ENCODE measurements at regions of chr21 and their contacts with region 1.

Region 1: GRCh38 chr21:26032263-26032662 is 138.3 kb downstream of the APP start:
- DNase-seq: no peak
- ATAC-seq: no peak
- H3K4me3 ChIP-seq: no peak overlapping the region
- H3K27ac ChIP-seq: no peak overlapping the region
- H3K4me1 ChIP-seq: no peaks in the 10 kb centered on the region
- H3K27me3 ChIP-seq: no peaks in the 10 kb centered on the region
- CTCF ChIP-seq: no peak
- POLR2A ChIP-seq: no peak
- RAD21 ChIP-seq: no peak

Region 2: DNA sequence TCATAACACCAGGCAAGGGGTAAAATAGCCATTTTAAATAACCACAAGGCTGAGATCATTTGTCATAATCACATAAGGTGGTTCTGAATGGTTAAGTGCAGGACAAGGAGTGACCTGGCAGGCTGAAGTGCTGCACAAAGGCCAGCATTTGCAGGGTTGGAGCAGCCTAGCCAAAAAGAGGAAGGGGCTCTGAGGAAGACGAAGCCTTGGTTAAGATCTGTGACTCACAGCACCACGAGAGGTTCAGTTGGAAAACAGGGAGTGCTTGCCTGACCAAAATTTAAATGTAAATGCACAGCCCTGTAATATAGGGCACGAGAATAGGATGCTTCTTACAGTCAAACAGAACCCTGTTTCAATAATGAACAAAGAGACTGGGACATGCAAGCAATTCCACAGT is 309.6 kb before region 1 on chr21:
- CTCF ChIA-PET with region 1: interaction called, 11 read pairs
- POLR2A ChIA-PET with region 1: no interaction called
- dilution Hi-C with region 1: no loop called
- in situ Hi-C with region 1: no loop called
- intact Hi-C with region 1: no loop called
- DNase-seq: no peak
- ATAC-seq: no peak
- H3K4me3 ChIP-seq: no peak overlapping the region
- H3K27ac ChIP-seq: no peak overlapping the region
- H3K4me1 ChIP-seq: no peaks in the 10 kb centered on the region
- H3K27me3 ChIP-seq: no peaks in the 10 kb centered on the region
- CTCF ChIP-seq: no peak
- POLR2A ChIP-seq: no peak
- RAD21 ChIP-seq: no peak

Region 3: DNA sequence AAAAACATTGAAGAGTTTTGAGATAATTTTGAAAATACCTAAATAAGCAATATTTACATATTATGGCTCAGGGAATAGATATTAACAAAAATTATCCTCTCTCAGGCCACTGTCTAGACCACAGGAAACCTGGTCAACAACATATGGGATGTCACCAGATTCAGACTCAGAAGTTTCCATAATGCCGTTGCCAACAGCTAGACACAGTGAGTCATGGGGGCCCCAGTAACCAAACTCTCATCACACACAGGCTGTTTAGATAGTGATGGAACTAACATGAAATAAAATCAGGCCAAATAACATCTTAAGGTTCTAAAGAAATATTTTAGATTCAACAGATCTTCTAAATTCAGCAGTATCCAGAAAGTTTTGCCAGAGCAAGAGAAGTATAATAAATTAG is 1616.3 kb after region 1 on chr21:
- CTCF ChIA-PET with region 1: no interaction called
- POLR2A ChIA-PET with region 1: no interaction called
- dilution Hi-C with region 1: no loop called
- in situ Hi-C with region 1: no loop called
- intact Hi-C with region 1: no loop called
- DNase-seq: peak; percentile 90
- ATAC-seq: peak; percentile 72
- H3K4me3 ChIP-seq: no peak overlapping the region
- H3K27ac ChIP-seq: peak overlapping the region; percentile 21
- H3K4me1 ChIP-seq: peaks cover 2% of the 10 kb centered on the region; the same call in 1 of the 2 replicates
- H3K27me3 ChIP-seq: no peaks in the 10 kb centered on the region
- CTCF ChIP-seq: no peak
- POLR2A ChIP-seq: no peak
- RAD21 ChIP-seq: no peak

Measured in IMR-90 (cell line).